Heart left ventricle (tissue), 16 donors: ENCODE measurements at regions of chr2 and their contacts with region 1.

Region 1: DNA sequence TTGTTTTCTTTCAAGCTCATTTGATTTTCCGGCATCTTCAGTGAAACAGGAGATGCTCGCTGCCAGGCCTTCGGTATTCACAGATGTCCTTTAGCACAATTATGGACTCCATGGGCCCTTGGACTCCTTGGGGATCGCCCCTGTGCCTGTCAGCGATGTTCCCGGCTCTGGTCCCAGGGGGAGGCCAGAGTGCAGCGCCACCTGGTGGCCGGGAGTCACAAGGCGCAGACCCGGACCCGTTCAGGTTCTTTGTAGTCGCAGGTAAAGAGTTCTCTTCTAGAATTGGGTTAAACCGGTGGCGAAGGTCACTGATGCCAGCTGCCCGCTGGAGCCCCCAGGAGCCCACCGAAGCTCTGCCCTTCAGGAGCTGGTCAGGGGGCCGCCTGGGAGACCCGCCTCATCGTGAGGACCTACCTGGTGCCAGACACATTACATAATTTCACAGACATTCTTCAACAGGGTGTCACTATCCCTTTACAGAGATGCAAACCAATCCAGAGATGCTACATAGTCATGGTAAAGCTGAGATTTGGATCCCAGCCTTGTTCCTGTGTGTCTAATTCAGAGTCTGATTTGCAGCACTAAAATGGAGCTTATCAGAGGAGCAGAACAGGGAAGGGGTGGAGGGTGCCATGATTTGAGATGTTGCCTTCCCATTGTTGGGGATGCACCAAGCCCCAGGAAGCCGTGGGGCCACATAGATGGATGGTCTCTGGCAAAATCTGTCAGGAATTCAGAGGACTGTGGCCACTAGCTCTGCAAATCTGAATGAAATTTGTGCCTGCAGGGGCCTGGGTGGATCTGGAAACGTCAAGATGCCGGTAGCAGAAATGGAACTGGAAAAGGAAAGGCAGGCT is 6.0 kb upstream of the INPP5D start:
- DNase-seq: peak; percentile 47 to 81 (median 56)
- ATAC-seq: peak in 2 of 4 donors; percentile 50 to 51
- H3K4me3 ChIP-seq: no peak overlapping the region
- H3K27ac ChIP-seq: no peak overlapping the region
- H3K4me1 ChIP-seq: peaks cover 0 to 29% (median 13%) of the 10 kb centered on the region in 12 donors
- H3K27me3 ChIP-seq: peaks cover 0 to 16% (median 0%) of the 10 kb centered on the region in 9 donors
- CTCF ChIP-seq: peak; percentile 77 to 96 (median 90)
- POLR2A ChIP-seq: no peak

Region 2: DNA sequence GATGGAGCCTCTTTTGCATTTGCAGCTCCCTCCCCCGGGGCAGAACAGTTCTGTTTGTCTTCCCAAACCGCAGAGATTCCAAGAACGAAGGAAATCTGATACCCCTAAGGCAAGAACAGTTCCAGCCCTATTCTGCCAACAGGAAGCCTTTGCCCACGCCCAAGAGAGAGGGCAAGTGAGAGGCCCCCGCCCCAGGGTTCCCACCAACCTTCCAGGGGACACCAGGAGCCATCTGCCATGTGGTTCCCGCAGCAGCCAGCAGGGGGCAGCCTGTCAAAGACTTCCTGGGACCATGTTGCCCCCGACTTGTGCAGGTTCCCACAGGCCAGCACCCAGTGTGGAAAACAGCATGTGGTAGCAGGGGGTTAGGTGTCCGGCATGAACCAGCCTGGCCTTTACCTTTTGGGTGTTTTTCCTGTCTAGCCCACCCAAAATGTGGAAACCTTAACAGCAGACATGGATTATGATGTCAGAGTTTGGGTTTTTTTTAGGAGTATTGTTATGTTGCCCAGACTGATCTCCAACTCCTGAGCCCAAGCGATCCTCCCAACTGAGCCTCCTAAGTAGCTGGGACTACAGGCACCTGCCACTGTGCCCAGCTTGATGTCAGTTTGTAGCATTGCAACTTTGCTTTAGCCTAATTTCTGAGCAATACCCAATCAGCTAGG is 442.5 kb before region 1 on chr2:
- intact Hi-C with region 1: loop called in 3 of 10 experiments (anchors 5 to 10 kb)
- DNase-seq: peak; percentile 48 to 84 (median 57)
- ATAC-seq: peak in 3 of 4 donors; percentile 65 to 73 (median 69)
- H3K4me3 ChIP-seq: no peak overlapping the region
- H3K27ac ChIP-seq: no peak overlapping the region
- H3K4me1 ChIP-seq: peaks cover 0 to 6% (median 0%) of the 10 kb centered on the region in 12 donors
- H3K27me3 ChIP-seq: no peaks in the 10 kb centered on the region
- CTCF ChIP-seq: peak; percentile 68 to 85 (median 78)
- POLR2A ChIP-seq: no peak

Region 3: GRCh38 chr2:233092432-233093165 is 38.4 kb after region 1 on chr2:
- intact Hi-C with region 1: no loop called
- DNase-seq: no peak
- ATAC-seq: peak in 1 of 4 donors; percentile 29
- H3K4me3 ChIP-seq: peak overlapping the region in 1 of 12 donors; percentile 18
- H3K27ac ChIP-seq: peak overlapping the region in 2 of 12 donors; percentile 46 to 74
- H3K4me1 ChIP-seq: peaks cover 0 to 53% (median 0%) of the 10 kb centered on the region in 12 donors
- H3K27me3 ChIP-seq: no peaks in the 10 kb centered on the region
- CTCF ChIP-seq: no peak
- POLR2A ChIP-seq: no peak

Region 4: GRCh38 chr2:233600386-233600785 is 546.2 kb after region 1 on chr2:
- intact Hi-C with region 1: no loop called
- DNase-seq: no peak
- ATAC-seq: no peak
- H3K4me3 ChIP-seq: no peak overlapping the region
- H3K27ac ChIP-seq: no peak overlapping the region
- H3K4me1 ChIP-seq: no peaks in the 10 kb centered on the region
- H3K27me3 ChIP-seq: peaks cover 0 to 23% (median 3%) of the 10 kb centered on the region in 9 donors
- CTCF ChIP-seq: no peak
- POLR2A ChIP-seq: no peak